GM12878 (cell line): ENCODE measurements at regions of chr21 and their contacts with region 1.

Region 1: GRCh38 chr21:36510114-36510655 is 30.3 kb upstream of the CLDN14 start:
- DNase-seq: no peak
- ATAC-seq: peak; percentile 24
- H3K4me3 ChIP-seq: no peak overlapping the region
- H3K27ac ChIP-seq: peak overlapping the region; percentile 80
- H3K4me1 ChIP-seq: peaks cover 79% of the 10 kb centered on the region
- H3K27me3 ChIP-seq: no peaks in the 10 kb centered on the region
- CTCF ChIP-seq: no peak
- EP300 ChIP-seq: no peak
- POLR2A ChIP-seq: no peak
- RAD21 ChIP-seq: no peak

Region 2: DNA sequence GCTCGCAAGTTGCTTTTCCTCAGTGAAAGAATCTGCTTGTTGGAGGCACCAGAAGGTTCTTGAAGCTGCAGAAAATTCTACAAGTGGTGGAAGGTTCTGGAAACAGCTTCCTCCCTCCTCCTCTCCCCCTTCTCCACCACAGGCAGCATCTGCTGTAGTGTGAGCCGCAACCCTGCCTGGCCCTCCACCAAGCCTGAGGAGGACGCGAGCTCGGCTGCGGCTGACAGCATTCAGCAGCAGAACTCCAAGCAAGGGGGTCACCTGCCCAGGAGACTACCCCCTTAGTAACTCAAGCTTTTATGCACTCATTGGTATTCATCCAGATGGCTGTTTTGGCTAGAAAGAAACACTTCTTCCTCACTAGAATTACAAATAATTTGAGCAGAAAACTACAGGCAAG is 18.5 kb after region 1 on chr21:
- CTCF ChIA-PET with region 1: interaction called, 67 read pairs
- POLR2A ChIA-PET with region 1: interaction called, 146 read pairs
- RAD21 ChIA-PET with region 1: interaction called, 189 read pairs
- SMC1A ChIA-PET with region 1: interaction called, 231 read pairs
- in situ Hi-C with region 1: no loop called
- intact Hi-C with region 1: no loop called
- DNase-seq: no peak
- ATAC-seq: no peak
- H3K4me3 ChIP-seq: no peak overlapping the region
- H3K27ac ChIP-seq: no peak overlapping the region
- H3K4me1 ChIP-seq: no peaks in the 10 kb centered on the region
- H3K27me3 ChIP-seq: no peaks in the 10 kb centered on the region
- CTCF ChIP-seq: no peak
- EP300 ChIP-seq: no peak
- POLR2A ChIP-seq: no peak
- RAD21 ChIP-seq: no peak

Region 3: GRCh38 chr21:36535618-36536241 is 25.5 kb after region 1 on chr21:
- CTCF ChIA-PET with region 1: interaction called, 67 read pairs
- POLR2A ChIA-PET with region 1: interaction called, 146 read pairs
- RAD21 ChIA-PET with region 1: interaction called, 189 read pairs
- SMC1A ChIA-PET with region 1: interaction called, 231 read pairs
- in situ Hi-C with region 1: no loop called
- intact Hi-C with region 1: loop called (anchors 1 kb)
- DNase-seq: peak; percentile 96
- ATAC-seq: peak; percentile 80
- H3K4me3 ChIP-seq: peak overlapping the region; percentile 45; the same call in 1 of the 2 replicates
- H3K27ac ChIP-seq: peak overlapping the region; percentile 90
- H3K4me1 ChIP-seq: peaks cover 40% of the 10 kb centered on the region
- H3K27me3 ChIP-seq: no peaks in the 10 kb centered on the region
- CTCF ChIP-seq: no peak
- EP300 ChIP-seq: peak; percentile 92 to 95
- POLR2A ChIP-seq: peak; percentile 61
- RAD21 ChIP-seq: peak; percentile 6; the same call in 1 of the 2 replicates

Region 4: GRCh38 chr21:36567216-36567885 is 57.2 kb after region 1 on chr21:
- CTCF ChIA-PET with region 1: no interaction called
- POLR2A ChIA-PET with region 1: no interaction called
- RAD21 ChIA-PET with region 1: no interaction called
- SMC1A ChIA-PET with region 1: no interaction called
- in situ Hi-C with region 1: no loop called
- intact Hi-C with region 1: no loop called
- DNase-seq: no peak
- ATAC-seq: no peak
- H3K4me3 ChIP-seq: no peak overlapping the region
- H3K27ac ChIP-seq: no peak overlapping the region
- H3K4me1 ChIP-seq: no peaks in the 10 kb centered on the region
- H3K27me3 ChIP-seq: peaks cover 0 to 1% of the 10 kb centered on the region in 2 experiments; a peak in 2 of 4 replicates
- CTCF ChIP-seq: no peak
- EP300 ChIP-seq: no peak
- POLR2A ChIP-seq: no peak
- RAD21 ChIP-seq: no peak